ENCODE measurements at regions of chr14 and their contacts with region 1.

Region 1: DNA sequence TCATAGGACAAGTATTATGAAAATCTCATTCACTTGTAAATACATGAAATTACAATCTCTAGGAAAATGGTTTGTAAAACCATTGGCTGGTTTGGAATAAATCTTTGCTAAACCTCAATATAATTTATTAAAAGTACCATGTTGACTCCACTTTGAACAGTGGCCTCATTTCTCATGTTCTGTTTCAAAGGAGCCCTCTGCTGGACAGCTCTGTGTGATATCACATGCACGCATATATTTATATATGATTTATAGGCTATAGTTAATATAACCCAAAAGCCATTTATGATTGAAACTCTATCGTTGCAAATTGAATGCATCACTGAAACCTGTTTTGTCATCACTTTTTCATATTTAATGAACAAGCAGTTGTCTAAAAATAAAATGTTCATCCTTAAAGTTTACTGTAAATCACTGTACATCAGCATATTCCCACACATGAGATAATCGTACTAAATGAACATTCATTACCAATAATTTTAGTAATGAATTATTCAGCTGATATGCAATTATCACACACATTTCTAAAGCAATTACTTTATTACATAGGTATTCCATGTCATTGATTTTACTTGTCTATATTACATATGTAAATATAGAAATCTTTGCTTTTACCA is 493.8 kb downstream of the NPAS3 start:
- DNase-seq: peak; percentile 11
- ATAC-seq: no peak
- H3K4me3 Mint-ChIP-seq: no peak overlapping the region
- H3K27ac Mint-ChIP-seq: no peak overlapping the region
- H3K4me1 Mint-ChIP-seq: peaks cover 10% of the 10 kb centered on the region
- H3K27me3 Mint-ChIP-seq: no peaks in the 10 kb centered on the region

Region 2: GRCh38 chr14:32588448-32589320 is 843.8 kb before region 1 on chr14:
- CTCF ChIA-PET with region 1: no interaction called
- POLR2A ChIA-PET with region 1: no interaction called
- intact Hi-C with region 1: loop called in 1 of 2 experiments (anchors 5 kb)
- DNase-seq: peak; percentile 11
- ATAC-seq: no peak
- H3K4me3 Mint-ChIP-seq: no peak overlapping the region
- H3K27ac Mint-ChIP-seq: no peak overlapping the region
- H3K4me1 Mint-ChIP-seq: no peaks in the 10 kb centered on the region
- H3K27me3 Mint-ChIP-seq: peaks cover 7% of the 10 kb centered on the region

Region 3: DNA sequence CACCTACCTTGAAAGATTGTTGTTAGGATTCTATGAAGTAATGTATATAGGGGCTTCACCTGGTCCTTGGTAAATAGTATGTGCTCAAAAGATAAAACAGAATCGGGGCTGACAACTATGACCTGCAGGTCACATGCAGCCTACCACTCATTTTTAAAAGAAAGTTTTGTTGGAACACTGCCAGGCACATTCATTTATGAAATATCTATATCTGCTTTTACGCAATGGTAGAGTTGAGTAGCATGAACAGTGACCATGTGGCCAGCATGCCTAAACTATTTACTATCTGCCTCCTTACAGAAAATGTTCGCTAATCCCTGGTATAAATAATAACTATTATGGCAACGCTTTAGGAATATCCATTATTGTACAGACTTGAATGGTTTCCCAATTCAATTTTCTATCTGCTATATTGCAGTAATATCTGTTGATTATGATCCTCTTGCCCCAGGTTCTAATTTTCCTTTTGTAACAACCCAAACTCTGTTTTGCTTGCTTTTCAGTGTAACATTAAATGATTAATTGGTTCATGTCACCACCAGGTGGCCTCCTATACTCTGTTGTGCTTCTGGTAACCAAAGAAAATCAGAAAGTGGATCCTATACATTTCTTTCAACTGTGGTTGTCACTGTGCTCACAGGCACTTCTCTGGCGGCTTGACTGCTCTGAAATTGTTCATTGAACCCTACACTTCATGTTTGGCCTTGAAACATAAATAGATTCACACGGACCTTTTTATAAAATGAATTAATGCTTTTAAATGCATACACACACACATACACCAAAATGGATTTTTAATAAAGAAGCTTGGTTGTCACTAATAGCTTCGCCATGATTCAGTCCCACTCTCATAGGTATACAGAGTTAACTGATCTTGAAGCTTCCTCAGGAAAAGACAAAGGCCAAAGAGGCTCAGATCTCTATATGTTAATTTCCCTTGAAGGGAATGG is 721.5 kb before region 1 on chr14:
- CTCF ChIA-PET with region 1: no interaction called
- POLR2A ChIA-PET with region 1: no interaction called
- intact Hi-C with region 1: loop called in 1 of 2 experiments (anchors 2 kb)
- DNase-seq: peak; percentile 17
- ATAC-seq: no peak
- H3K4me3 Mint-ChIP-seq: no peak overlapping the region
- H3K27ac Mint-ChIP-seq: no peak overlapping the region
- H3K4me1 Mint-ChIP-seq: peaks cover 2% of the 10 kb centered on the region
- H3K27me3 Mint-ChIP-seq: peaks cover 3% of the 10 kb centered on the region

Region 4: GRCh38 chr14:33081259-33081658 is 351.3 kb before region 1 on chr14:
- CTCF ChIA-PET with region 1: no interaction called
- POLR2A ChIA-PET with region 1: no interaction called
- intact Hi-C with region 1: no loop called
- DNase-seq: no peak
- ATAC-seq: no peak
- H3K4me3 Mint-ChIP-seq: no peak overlapping the region
- H3K27ac Mint-ChIP-seq: no peak overlapping the region
- H3K4me1 Mint-ChIP-seq: no peaks in the 10 kb centered on the region
- H3K27me3 Mint-ChIP-seq: no peaks in the 10 kb centered on the region

Region 5: DNA sequence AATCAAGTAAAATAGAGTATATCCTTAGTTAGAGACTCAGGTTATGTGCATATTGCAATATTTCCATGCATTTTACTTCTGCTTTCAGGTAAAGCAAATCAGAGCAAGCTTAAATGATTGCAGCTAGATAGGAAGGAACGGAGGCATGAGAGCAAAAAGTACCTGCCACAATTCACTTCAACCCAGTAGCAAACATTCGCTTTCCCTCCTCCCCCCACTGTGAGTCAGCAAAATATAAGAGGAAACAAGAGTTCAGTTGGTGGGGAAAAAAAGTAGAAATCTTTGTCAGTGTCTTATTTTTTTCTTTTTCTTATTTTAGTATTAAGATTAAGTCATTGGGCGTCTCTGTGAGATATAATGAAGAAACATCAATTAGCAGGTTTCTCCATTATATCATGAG is 18.5 kb before region 1 on chr14:
- CTCF ChIA-PET with region 1: no interaction called
- POLR2A ChIA-PET with region 1: no interaction called
- intact Hi-C with region 1: no loop called
- DNase-seq: no peak
- ATAC-seq: no peak
- H3K4me3 Mint-ChIP-seq: no peak overlapping the region
- H3K27ac Mint-ChIP-seq: no peak overlapping the region
- H3K4me1 Mint-ChIP-seq: no peaks in the 10 kb centered on the region
- H3K27me3 Mint-ChIP-seq: peaks cover 6% of the 10 kb centered on the region

Measured in activated CD4-positive, alpha-beta T cell treated with anti-CD3 and anti-CD28 coated beads for 36 hours (primary cell).